ENCODE measurements at regions of chr7 and their contacts with region 1.

Region 1: DNA sequence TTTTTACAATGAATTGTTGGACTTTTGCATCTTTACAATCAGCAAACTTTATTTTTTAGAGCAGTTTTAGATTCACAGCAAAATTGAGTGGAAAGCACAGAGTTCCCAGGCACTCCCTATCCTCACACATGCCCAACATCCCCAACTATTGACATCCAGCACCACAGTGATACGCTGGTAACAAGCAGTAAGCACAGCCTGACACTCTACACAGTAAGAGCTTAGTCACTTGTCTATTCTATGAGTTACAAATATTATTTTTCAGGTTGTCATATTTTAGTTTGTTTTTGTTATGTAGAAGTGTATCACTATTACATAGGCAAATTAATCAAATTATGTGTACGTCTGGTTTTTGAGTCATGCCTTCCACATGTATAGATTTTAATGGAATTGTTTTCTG is 27.0 kb upstream of the GIMAP7 start:
- DNase-seq: no peak
- ATAC-seq: no peak
- H3K4me3 ChIP-seq: no peak overlapping the region
- H3K4me3 Mint-ChIP-seq: no peak overlapping the region
- H3K27ac ChIP-seq: no peak overlapping the region
- H3K27ac Mint-ChIP-seq: peak overlapping the region; percentile 97
- H3K4me1 ChIP-seq: peaks cover 24% of the 10 kb centered on the region
- H3K4me1 Mint-ChIP-seq: peaks cover 89% of the 10 kb centered on the region
- H3K27me3 ChIP-seq: no peaks in the 10 kb centered on the region
- H3K27me3 Mint-ChIP-seq: no peaks in the 10 kb centered on the region
- CTCF ChIP-seq: no peak

Region 2: DNA sequence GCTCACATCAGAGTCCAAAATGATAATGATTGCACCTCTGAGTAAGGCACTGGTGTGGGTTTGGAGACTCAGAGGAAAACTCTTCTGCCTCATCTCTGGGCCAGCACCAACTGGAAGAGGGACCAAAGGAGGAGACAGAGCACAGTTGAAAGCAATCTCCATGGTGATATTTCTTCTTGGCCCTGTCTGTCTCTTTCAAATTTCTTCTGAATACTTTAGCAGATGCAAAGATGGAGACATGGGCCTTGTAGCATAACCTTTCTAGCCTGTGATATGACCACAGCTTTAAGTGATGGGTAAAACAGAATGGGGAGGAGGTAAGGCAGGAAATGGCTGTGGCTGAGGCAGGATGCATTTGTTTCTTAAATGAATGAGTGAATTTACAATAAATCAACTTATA is 14.9 kb after region 1 on chr7:
- CTCF ChIA-PET with region 1: interaction called, 5 read pairs
- POLR2A ChIA-PET with region 1: interaction called, 111 read pairs
- intact Hi-C with region 1: loop called in 1 of 2 experiments (anchors 2 kb)
- DNase-seq: peak in 6 of 14 experiments; percentile 38 to 85 (median 64)
- ATAC-seq: peak; percentile 83
- H3K4me3 ChIP-seq: no peak overlapping the region
- H3K4me3 Mint-ChIP-seq: peak overlapping the region; percentile 50
- H3K27ac ChIP-seq: peak overlapping the region; percentile 66 to 69
- H3K27ac Mint-ChIP-seq: peak overlapping the region; percentile 88
- H3K4me1 ChIP-seq: peaks cover 44% of the 10 kb centered on the region
- H3K4me1 Mint-ChIP-seq: peaks cover 89% of the 10 kb centered on the region
- H3K27me3 ChIP-seq: no peaks in the 10 kb centered on the region
- H3K27me3 Mint-ChIP-seq: no peaks in the 10 kb centered on the region
- CTCF ChIP-seq: no peak

Region 3: DNA sequence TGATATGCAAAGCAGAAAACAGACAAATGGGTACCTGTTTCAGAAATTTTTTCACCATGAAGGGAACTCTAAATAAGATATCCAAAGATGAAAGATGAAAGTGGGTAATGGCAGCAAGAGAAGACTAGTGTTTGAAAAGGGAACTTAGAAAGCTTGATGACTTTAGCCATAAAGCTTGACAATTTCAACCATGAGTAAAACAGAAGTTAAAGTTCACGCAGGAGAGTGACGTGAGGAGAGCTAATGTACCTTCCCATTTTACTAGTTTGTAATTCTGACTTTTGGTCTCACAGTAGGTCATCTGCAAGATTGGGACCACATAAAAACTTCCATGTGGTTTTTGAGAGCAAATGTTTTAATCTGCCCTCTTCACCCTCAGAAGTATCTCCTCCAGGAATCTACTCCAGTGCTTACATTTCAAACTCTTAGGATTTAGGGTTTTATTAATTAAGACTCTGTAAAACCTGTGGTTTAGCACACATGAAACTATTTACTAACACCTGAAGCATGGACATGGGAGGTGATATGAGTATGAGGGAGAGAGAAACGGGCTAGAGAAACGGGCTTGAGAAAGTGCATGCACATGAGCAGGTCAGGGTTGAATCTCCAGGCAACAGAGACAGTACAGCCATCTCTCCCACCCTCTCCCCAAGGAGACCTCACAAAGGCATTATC is 173.5 kb after region 1 on chr7:
- CTCF ChIA-PET with region 1: no interaction called
- POLR2A ChIA-PET with region 1: no interaction called
- intact Hi-C with region 1: no loop called
- DNase-seq: no peak
- ATAC-seq: no peak
- H3K4me3 ChIP-seq: no peak overlapping the region
- H3K4me3 Mint-ChIP-seq: no peak overlapping the region
- H3K27ac ChIP-seq: no peak overlapping the region
- H3K27ac Mint-ChIP-seq: peak overlapping the region; percentile 91
- H3K4me1 ChIP-seq: peaks cover 48% of the 10 kb centered on the region
- H3K4me1 Mint-ChIP-seq: peaks cover 61% of the 10 kb centered on the region
- H3K27me3 ChIP-seq: no peaks in the 10 kb centered on the region
- H3K27me3 Mint-ChIP-seq: no peaks in the 10 kb centered on the region
- CTCF ChIP-seq: no peak